Testis (tissue), 5 donors: ENCODE measurements at regions of chr1 and their contacts with region 1.

Region 1: DNA sequence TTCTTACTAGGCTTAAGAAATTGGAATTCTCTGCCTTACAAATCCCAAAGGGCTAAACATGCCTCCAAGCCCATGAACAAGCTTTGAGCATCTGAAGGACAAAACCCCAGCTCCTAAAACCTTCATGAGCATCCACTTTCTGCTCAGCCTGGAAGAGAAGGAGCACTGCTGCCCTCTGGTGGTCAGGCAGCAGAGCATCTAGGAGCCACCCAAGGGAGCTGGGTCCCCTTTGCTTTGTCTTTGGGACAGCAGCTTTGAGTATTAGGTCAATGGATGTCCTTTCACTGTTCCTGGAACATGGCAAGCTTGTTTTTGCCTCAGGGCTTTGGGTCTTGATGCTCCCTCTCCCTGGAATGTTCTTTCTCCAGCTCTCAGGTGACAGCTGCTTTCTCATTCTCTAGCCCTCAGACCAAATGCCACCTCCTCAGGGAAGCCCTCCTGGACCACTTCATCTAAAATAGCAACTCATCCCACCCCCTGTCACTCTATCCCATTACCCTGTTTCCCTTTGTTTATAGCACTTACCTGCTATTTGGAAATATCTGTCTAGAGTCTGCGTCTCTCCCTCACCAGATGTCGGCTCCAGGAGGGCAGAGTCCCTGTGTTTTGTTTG is 25.7 kb downstream of the RAB7B start:
- DNase-seq: peak; percentile 78
- H3K4me3 ChIP-seq: no peak overlapping the region
- H3K27ac ChIP-seq: no peak overlapping the region
- H3K4me1 ChIP-seq: peaks cover 19% of the 10 kb centered on the region
- H3K27me3 ChIP-seq: no peaks in the 10 kb centered on the region
- CTCF ChIP-seq: peak; percentile 94 to 96 (median 95)
- POLR2A ChIP-seq: no peak

Region 2: DNA sequence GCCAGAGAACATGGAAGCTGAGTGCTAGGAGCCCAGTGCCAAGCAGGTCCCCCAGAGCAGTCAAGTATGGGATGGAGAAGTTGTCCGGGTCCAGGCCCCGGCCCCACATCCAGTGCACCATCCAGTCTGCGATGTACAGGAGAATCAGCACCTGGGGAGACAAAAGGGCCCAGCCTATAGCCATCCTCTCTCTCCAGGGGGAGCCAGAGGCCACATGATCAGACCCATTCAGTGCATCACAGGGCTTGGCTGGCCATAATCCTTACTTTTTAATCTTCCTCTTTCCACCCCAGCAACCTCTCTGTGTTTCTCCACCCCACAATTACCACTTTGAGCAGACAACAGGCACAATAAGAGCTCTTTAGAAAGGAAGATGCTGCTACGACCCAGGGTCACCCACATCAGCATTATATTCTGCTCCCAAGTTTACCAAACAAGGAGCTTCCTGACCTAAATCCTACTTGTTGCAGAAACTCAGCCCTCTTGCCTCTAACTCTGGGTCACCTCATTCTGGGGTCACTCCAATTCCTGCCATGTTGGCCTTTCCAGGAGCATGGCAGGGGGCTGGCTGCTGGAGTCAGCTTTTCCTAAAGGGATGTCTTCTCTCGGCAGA is 185.8 kb before region 1 on chr1:
- intact Hi-C with region 1: loop called (anchors 10 kb)
- DNase-seq: peak; percentile 79
- H3K4me3 ChIP-seq: no peak overlapping the region
- H3K27ac ChIP-seq: no peak overlapping the region
- H3K4me1 ChIP-seq: no peaks in the 10 kb centered on the region
- H3K27me3 ChIP-seq: no peaks in the 10 kb centered on the region
- CTCF ChIP-seq: peak; percentile 40 to 70 (median 51)
- POLR2A ChIP-seq: no peak

Region 3: DNA sequence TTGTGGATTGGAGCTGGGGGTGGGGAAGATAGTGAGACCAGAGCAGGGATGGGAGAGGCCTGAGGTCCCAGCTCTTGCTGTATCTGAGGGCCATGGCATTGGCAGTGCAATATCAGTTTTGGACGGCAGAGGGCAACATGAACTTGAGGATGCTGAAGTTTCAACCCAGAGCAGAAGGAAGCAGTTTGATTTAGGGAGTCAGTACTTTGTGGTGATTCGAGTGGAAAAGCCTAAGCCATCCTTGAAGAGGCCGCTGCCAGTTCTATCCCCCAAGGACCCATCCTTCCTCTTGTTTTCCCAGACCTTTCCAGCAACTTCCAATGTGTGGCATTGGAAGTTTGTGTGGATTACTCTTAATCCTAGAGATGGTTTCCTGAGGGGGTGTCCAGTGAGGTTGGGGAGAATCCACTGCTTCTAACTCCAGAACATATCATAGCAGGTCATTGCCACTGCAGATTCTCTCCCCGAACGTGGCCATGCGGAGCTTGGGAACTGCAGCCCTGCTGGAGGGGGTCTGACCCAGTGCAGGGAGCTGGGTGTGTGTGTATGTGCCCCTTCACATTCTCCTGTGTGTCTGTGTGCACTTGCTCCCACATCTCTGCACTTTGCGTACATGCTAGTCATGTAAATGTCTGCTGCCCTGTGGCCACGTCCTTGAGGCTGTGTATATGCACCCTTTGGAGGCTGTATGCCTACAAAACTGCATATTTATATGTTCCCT is 58.3 kb before region 1 on chr1:
- intact Hi-C with region 1: loop called (anchors 5 kb)
- DNase-seq: peak; percentile 89
- H3K4me3 ChIP-seq: no peak overlapping the region
- H3K27ac ChIP-seq: no peak overlapping the region
- H3K4me1 ChIP-seq: peaks cover 19% of the 10 kb centered on the region
- H3K27me3 ChIP-seq: no peaks in the 10 kb centered on the region
- CTCF ChIP-seq: peak; percentile 79 to 87 (median 83)
- POLR2A ChIP-seq: no peak